Astrocyte of the cerebellum (primary cell): ENCODE measurements at regions of chr4 and their contacts with region 1.

Region 1: DNA sequence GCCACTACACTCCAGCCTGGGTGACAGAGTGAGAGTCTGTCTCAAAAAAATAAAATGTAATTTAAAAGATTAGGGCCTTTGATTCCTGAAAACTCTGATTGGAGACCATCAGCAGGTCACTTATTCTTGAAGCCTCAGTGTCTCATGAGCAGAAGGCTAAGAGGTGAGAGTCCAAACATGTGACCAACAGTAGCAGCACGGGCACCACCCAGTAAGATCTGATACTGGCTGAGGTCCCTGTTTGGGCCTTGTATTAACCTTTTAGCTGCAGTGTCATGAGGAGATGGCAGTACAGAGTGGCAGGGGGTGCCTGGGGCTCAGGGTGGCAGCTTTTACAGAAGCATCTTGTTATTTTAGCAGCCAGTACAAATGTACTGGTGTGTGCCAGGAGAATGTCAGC is 89.3 kb downstream of the FHDC1 start:
- DNase-seq: no peak
- H3K4me3 ChIP-seq: no peak overlapping the region
- CTCF ChIP-seq: no peak

Region 2: DNA sequence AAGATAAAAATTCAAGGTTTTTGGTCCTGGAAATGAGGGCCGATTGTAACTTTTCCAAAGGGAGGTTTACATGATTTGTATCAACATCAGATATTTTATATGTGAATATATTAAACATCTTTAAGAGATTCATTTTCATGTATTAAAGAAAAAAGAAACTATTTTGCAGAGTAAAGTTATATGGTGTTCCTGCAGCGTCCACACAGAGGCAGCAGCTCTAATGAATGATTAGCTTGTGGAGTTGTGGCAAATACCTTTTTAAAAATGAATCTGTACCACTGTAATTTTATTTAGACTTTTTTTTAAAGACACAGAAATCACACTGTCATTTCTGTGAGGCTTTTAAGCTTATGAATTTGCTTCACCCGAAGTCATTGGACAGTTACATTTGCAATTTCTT is 114.9 kb before region 1 on chr4:
- in situ Hi-C with region 1: no loop called
- DNase-seq: no peak
- H3K4me3 ChIP-seq: no peak overlapping the region
- CTCF ChIP-seq: no peak

Region 3: DNA sequence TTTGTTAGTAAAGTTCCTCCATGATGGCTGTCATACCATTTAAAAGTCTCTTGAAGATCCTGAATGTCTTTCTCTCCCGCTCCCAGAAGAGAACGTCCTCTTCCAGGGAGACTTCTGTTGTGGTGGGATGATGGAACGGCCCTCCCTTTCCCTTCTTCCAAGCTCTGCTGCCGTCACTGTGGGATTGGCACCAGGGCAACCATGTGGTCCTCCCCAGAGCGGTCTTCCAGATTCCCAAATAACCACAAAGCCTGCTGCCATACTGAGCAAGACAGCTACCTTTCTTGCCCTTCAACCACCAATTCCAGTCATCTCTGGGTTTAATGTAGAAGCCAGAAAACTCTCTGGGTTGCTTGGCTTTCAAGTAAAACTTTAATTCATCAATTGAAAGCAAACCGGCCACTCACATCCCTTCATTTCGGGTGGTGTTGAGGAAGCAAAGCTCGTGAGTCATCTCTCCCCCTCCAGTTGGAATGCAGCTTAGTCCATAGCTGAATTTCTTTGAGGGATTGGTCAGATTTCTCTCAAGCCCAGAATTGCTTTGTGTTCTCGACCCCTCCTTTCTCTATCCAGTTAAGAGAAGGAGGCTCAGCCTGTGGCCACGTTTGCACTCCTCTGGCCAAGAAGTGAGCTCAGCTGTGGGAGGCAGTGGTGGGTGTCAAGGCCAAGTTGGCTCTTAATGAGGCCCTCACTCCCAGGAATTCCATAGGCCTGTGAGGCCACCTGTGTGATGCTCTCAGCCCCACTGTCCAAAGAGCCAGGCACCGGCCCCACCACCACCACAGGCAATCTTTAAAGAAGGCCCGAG is 52.4 kb before region 1 on chr4:
- in situ Hi-C with region 1: no loop called
- DNase-seq: peak; percentile 99
- H3K4me3 ChIP-seq: no peak overlapping the region
- CTCF ChIP-seq: no peak

Region 4: DNA sequence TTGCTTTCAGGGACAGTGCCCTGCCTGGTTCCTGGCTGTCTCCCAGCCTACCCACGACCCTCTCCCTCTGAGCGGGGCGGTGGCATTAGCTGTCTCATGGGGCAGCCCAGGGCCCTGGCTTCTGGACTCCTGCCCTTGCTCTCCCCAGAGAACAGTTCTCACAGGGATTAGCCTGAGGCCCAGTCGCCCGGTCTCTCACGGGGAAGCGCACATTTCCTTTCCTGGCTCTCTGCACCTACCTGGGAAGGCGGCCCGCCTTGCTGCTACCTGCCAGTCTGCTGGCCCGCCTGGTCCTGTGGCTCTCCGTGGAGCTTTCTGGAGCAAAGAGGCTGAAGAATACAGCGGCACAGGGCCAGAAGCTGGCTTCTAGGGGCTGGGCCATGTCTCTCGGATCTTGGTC is 39.2 kb after region 1 on chr4:
- in situ Hi-C with region 1: loop called (anchors 5 kb)
- DNase-seq: no peak
- H3K4me3 ChIP-seq: no peak overlapping the region
- CTCF ChIP-seq: no peak

Region 5: DNA sequence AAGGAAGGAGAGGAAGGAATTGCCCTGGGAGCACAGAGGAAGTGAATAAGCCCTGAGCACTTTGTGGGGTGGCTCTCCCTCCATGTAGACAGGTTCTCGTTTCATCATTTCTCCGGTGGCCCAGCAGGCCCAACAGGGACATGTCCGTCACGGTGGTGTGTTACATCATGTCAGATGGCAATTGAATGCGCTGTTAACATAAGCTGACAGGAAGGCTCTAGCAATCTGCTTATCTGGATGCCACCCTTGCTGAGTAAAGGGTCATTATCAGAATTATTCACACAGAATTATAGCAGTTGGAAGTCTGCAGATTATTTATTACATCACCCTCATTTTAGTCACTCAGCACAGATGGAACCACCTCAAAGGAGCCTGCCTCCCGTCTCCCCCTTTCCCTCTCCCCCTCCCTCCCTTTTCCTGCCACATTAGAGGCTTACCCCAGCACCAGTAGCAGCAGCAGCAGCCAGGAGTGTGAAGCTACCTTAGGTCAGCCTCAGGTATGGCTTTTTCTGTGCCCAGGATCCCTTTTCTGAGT is 54.5 kb after region 1 on chr4:
- in situ Hi-C with region 1: no loop called
- DNase-seq: no peak
- H3K4me3 ChIP-seq: no peak overlapping the region
- CTCF ChIP-seq: no peak